Activated CD4-positive, alpha-beta T cell treated with anti-CD3 and anti-CD28 coated beads for 36 hours (primary cell): ENCODE measurements at regions of chr4 and their contacts with region 1.

Region 1: DNA sequence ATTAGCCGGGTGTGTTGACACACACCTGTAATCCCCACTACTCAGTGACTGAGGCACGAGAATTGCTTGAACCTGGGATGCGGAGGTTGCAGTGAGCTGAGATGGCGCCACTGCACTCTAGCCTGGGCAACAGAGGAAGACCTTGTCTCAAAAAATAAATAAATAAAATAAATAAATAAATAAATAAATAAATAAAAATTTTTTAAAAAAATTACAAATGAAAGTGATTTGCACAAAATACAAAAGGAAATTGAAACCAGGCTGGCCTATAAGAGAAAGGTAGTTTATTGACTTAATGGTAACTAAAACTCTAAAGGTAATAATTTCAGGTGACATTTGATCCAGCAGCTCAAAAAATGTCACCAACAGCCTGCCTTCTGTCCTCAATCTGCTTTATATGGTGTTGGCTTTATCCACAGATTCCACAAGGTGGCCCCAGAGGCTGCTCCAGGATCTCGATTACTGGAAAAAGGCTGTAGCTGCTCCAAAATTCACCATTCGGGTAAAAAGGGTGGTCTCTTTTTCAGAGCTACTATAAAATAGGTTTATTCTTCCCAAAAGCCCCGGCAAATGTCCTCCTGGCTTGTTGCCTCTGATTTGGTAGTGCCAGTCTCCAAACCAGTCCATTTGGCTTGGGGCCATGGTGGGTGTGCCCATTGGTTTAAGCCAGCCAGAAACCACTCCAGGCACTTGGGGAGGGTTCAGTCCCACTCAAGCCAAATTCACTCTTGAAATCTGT is 61.4 kb upstream of the TRIM2 start:
- DNase-seq: peak; percentile 79
- ATAC-seq: peak; percentile 85
- H3K4me3 Mint-ChIP-seq: no peak overlapping the region
- H3K27ac Mint-ChIP-seq: no peak overlapping the region
- H3K4me1 Mint-ChIP-seq: peaks cover 8% of the 10 kb centered on the region
- H3K27me3 Mint-ChIP-seq: peaks cover 3% of the 10 kb centered on the region

Region 2: DNA sequence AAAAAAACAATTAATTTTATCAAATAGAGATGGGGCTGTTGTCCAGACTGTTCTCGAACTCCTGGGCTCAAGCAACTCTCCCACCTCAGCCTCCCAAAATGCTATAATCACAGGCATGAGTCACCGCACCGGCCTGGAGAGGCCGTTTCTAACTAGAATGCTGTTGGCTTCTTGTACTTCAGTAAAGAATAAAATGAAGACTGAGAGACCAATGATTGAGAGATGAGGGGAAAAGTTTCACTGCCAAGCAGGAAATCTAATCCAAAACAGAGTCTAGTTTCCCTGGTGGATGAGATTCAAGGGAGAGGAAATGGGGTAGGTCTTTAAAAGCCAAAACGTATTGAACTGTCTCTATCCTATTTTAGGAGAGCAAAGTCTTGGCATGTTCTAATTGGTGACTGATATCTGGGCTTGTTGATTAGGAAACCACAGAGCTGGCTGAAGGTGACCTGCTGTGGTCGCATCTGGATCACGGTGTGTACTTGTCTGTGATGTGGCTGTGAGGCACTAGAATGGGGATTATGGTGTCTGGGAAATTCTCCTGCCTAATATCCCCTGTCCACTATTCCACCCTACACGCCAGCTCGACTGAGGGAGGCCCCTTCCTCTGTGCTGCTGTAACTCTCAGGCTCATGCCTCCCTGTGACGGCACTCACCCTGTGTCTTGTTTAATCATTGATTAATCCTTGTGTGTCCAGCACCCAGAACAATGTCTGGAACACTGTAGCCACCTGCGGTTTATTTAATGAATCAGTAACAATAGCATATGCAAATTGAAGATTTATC is 46.3 kb after region 1 on chr4:
- CTCF ChIA-PET with region 1: no interaction called
- POLR2A ChIA-PET with region 1: no interaction called
- intact Hi-C with region 1: no loop called
- DNase-seq: no peak
- ATAC-seq: no peak
- H3K4me3 Mint-ChIP-seq: no peak overlapping the region
- H3K27ac Mint-ChIP-seq: no peak overlapping the region
- H3K4me1 Mint-ChIP-seq: no peaks in the 10 kb centered on the region
- H3K27me3 Mint-ChIP-seq: no peaks in the 10 kb centered on the region

Region 3: GRCh38 chr4:153643406-153644383 is 500.8 kb after region 1 on chr4:
- CTCF ChIA-PET with region 1: interaction called, 5 read pairs
- POLR2A ChIA-PET with region 1: no interaction called
- intact Hi-C with region 1: loop called (anchors 1 kb)
- DNase-seq: no peak
- ATAC-seq: peak; percentile 92
- H3K4me3 Mint-ChIP-seq: no peak overlapping the region
- H3K27ac Mint-ChIP-seq: no peak overlapping the region
- H3K4me1 Mint-ChIP-seq: peaks cover 23% of the 10 kb centered on the region
- H3K27me3 Mint-ChIP-seq: no peaks in the 10 kb centered on the region